Prostate gland (tissue), 2 donors: ENCODE measurements at regions of chr21 and their contacts with region 1.

Region 1: GRCh38 chr21:29164325-29164942 is 34.0 kb downstream of the MAP3K7CL start:
- DNase-seq: no peak
- H3K4me3 ChIP-seq: no peak overlapping the region
- H3K27ac ChIP-seq: no peak overlapping the region
- H3K4me1 ChIP-seq: no peaks in the 10 kb centered on the region
- H3K27me3 ChIP-seq: no peaks in the 10 kb centered on the region
- CTCF ChIP-seq: peak in 3 of 4 experiments; percentile 50 to 77 (median 77)
- POLR2A ChIP-seq: no peak

Region 2: DNA sequence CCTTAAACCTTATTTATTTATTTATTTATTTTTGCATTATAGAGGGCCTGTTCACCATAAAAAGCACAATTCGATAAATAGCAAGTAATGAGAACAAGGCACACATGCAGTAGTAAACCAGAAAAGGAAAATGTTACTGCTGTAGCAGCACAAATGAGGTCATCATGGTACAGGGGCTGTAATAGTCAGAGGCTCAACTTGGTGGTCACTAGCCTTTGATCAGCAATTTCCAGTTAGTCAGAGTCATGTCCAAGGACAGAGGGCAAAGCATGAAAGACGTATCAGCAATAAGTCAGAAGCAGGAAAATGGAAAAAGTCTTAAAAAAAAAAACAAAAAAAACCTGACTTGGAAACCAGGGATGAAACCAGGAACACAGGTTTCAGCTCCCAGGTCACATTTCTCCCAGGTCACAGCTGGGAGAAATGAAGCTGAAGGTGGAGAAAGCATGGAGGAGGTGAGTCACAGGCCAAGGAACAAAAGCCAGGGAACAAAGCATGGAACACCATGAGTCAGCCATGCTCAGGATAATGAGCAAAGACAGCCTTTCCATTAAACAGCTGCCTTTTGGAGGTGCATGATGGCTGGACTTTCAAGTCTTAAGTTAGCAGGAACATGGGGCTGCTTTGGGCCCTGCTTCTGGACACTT is 728.0 kb before region 1 on chr21:
- intact Hi-C with region 1: no loop called
- DNase-seq: no peak
- H3K4me3 ChIP-seq: no peak overlapping the region
- H3K27ac ChIP-seq: no peak overlapping the region
- H3K4me1 ChIP-seq: no peaks in the 10 kb centered on the region
- H3K27me3 ChIP-seq: no peaks in the 10 kb centered on the region
- CTCF ChIP-seq: no peak
- POLR2A ChIP-seq: no peak

Region 3: DNA sequence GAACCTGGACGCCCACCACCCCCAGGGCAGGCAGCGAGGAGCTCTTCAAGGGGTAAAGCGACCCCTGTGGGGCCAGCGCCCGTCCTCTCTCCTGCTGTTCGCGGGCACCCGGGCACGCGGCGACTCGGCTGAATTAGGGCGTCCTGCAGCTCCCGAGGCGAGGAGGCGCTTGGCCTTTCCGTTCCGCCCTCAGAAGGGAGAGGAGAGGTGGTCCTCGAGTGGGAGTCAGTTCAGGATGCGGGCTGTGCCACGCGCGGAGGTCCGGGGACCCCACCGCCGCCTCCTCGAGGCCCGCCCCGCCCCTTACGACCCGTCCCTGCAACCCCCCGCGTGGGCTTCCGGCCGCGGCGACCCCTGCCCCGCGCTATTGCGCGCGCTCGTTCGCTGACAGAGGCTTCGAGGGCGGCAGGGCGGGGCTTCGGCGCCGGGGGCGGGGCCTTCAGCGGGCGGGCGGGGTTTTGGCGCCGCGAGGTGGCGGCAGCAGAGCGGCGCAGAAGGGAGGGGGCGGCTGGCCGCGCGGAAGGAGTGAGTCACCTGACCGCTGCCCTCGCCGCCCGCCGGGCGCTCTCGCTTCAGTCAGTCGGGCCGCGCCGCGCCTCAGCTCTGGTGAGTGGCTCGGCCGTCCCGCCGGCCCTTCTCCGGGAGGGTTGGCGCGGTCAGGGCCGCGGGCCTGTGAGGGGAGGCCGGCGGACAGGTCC is 134.1 kb after region 1 on chr21 and contains the start of gene BACH1:
- intact Hi-C with region 1: loop called (anchors 10 kb)
- DNase-seq: peak; percentile 86
- H3K4me3 ChIP-seq: peak within 1 kb of the TSS; percentile 89 to 99
- H3K27ac ChIP-seq: peak within 1 kb of the TSS; percentile 85 to 97
- H3K4me1 ChIP-seq: no peaks in the 10 kb centered on the region
- H3K27me3 ChIP-seq: no peaks in the 10 kb centered on the region
- CTCF ChIP-seq: peak; percentile 48 to 79 (median 61)
- POLR2A ChIP-seq: peak; percentile 92
- total RNA-seq, gene BACH1: 42.4 to 46.2 TPM

Region 4: GRCh38 chr21:29342363-29342957 is 178.0 kb after region 1 on chr21:
- intact Hi-C with region 1: loop called (anchors 5 kb)
- DNase-seq: no peak
- H3K4me3 ChIP-seq: no peak overlapping the region
- H3K27ac ChIP-seq: no peak overlapping the region
- H3K4me1 ChIP-seq: no peaks in the 10 kb centered on the region
- H3K27me3 ChIP-seq: no peaks in the 10 kb centered on the region
- CTCF ChIP-seq: no peak
- POLR2A ChIP-seq: no peak

Region 5: GRCh38 chr21:29372063-29372802 is 207.8 kb after region 1 on chr21:
- intact Hi-C with region 1: loop called (anchors 5 kb)
- DNase-seq: peak; percentile 76
- H3K4me3 ChIP-seq: no peak overlapping the region
- H3K27ac ChIP-seq: no peak overlapping the region
- H3K4me1 ChIP-seq: no peaks in the 10 kb centered on the region
- H3K27me3 ChIP-seq: no peaks in the 10 kb centered on the region
- CTCF ChIP-seq: peak; percentile 48 to 90 (median 83)
- POLR2A ChIP-seq: no peak